Activated CD4-positive, alpha-beta T cell treated with anti-CD3 and anti-CD28 coated beads for 36 hours (primary cell): ENCODE measurements at regions of chr21 and their contacts with region 1.

Region 1: DNA sequence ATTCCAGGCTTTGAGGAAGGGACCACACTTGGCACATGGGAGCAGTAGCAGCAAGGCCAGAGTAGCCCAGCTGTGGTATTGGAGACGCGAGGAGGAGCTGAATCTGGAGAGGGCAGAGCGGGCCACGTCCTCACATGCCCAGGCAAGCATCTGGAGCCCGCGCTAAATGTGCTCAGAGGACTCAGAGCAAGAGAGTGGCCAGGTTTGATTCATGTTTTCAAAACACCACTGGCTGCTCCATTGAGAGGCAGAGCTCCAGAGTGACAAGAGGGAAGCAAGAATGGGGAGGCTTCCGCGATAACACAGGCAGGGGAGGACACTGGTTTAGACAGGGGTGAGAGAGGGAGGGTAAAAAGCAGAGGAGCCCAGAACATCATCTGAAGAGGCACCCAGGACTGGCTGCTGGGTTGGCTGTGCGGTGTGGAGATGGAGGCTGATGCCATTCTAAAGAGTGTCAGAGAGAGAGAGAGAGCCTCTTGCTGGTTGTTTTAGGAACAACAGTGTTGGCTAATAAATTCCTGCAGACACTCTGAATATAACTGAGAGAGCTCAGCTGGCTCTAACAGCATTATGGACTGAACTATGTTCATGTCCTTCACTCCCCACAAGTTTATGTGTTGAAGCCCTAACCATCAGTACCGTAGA is 32.3 kb downstream of the RCAN1 start:
- DNase-seq: peak; percentile 35
- ATAC-seq: peak; percentile 70
- H3K4me3 Mint-ChIP-seq: no peak overlapping the region
- H3K27ac Mint-ChIP-seq: no peak overlapping the region
- H3K4me1 Mint-ChIP-seq: peaks cover 11% of the 10 kb centered on the region
- H3K27me3 Mint-ChIP-seq: no peaks in the 10 kb centered on the region

Region 2: DNA sequence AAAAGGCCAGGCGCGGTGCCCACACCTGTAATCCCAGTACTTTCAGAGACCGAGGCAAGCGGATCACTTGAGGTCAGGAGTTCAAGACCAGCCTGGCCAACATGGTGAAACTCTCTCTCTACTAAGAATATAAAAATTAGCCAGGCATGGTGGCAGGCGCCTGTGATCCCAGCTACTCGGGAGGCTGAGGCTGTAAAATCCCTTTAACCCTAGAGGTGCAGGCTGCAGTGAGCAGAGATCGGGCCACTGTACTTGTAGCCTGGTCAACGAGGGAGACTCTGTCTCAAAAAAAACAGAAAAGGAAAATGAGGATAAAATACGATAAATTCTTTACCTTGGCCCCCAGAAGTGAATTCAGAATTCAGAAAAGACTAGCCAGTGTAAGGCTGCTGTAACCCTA is 1104.4 kb before region 1 on chr21:
- CTCF ChIA-PET with region 1: no interaction called
- POLR2A ChIA-PET with region 1: no interaction called
- intact Hi-C with region 1: no loop called
- DNase-seq: no peak
- ATAC-seq: no peak
- H3K4me3 Mint-ChIP-seq: peak overlapping the region; percentile 83
- H3K27ac Mint-ChIP-seq: peak overlapping the region; percentile 88
- H3K4me1 Mint-ChIP-seq: peaks cover 17% of the 10 kb centered on the region
- H3K27me3 Mint-ChIP-seq: no peaks in the 10 kb centered on the region

Region 3: DNA sequence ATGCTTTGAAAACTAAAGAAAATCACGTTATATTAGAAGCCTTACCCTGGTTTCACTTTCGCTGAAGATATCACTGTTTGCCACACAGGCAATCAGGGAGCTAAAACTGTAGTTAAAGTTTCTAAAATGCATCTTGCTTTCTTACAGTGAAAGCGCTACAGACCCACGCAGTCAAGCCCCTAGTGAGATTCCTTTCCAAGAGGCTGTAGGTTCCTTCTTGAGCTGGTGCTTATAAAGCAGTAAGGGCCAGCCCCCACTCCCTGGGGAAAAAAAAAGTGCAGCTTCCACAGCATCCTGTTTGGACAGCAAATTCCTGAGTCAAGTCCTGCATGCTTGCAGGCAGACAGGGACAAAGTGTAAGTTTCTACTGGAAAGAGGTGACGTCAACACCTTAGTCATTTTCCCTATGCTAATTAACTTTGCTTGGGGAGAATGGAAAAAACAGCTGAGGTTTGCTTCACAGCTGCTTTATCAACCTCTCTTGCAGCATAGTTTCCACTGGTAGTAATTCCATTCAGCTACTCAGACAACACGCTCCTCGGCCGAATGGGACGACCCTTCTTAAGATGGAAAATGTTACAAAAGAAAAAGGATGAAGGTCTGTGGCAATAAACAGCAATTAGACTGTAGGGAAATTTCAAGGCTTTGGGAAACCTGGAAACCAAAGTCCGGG is 55.9 kb before region 1 on chr21:
- CTCF ChIA-PET with region 1: interaction called, 3 read pairs
- POLR2A ChIA-PET with region 1: interaction called, 3 read pairs
- intact Hi-C with region 1: loop called (anchors 1 to 5 kb)
- DNase-seq: peak; percentile 71
- ATAC-seq: peak; percentile 85
- H3K4me3 Mint-ChIP-seq: peak overlapping the region; percentile 55
- H3K27ac Mint-ChIP-seq: peak overlapping the region; percentile 85
- H3K4me1 Mint-ChIP-seq: peaks cover 35% of the 10 kb centered on the region
- H3K27me3 Mint-ChIP-seq: peaks cover 2% of the 10 kb centered on the region

Region 4: GRCh38 chr21:34603002-34603709 is 20.5 kb after region 1 on chr21:
- CTCF ChIA-PET with region 1: interaction called, 11 read pairs
- POLR2A ChIA-PET with region 1: no interaction called
- intact Hi-C with region 1: no loop called
- DNase-seq: peak; percentile 85
- ATAC-seq: peak; percentile 89
- H3K4me3 Mint-ChIP-seq: no peak overlapping the region
- H3K27ac Mint-ChIP-seq: no peak overlapping the region
- H3K4me1 Mint-ChIP-seq: no peaks in the 10 kb centered on the region
- H3K27me3 Mint-ChIP-seq: no peaks in the 10 kb centered on the region

Region 5: GRCh38 chr21:34625030-34625593 is 42.5 kb after region 1 on chr21:
- CTCF ChIA-PET with region 1: no interaction called
- POLR2A ChIA-PET with region 1: no interaction called
- intact Hi-C with region 1: loop called in 1 of 2 experiments (anchors 5 kb)
- DNase-seq: no peak
- ATAC-seq: no peak
- H3K4me3 Mint-ChIP-seq: no peak overlapping the region
- H3K27ac Mint-ChIP-seq: no peak overlapping the region
- H3K4me1 Mint-ChIP-seq: no peaks in the 10 kb centered on the region
- H3K27me3 Mint-ChIP-seq: peaks cover 4% of the 10 kb centered on the region

Region 6: GRCh38 chr21:34639882-34640788 is 57.5 kb after region 1 on chr21:
- CTCF ChIA-PET with region 1: no interaction called
- POLR2A ChIA-PET with region 1: no interaction called
- intact Hi-C with region 1: loop called in 1 of 2 experiments (anchors 1 kb)
- DNase-seq: peak; percentile 65
- ATAC-seq: peak; percentile 77
- H3K4me3 Mint-ChIP-seq: peak overlapping the region; percentile 32
- H3K27ac Mint-ChIP-seq: peak overlapping the region; percentile 72
- H3K4me1 Mint-ChIP-seq: peaks cover 24% of the 10 kb centered on the region
- H3K27me3 Mint-ChIP-seq: no peaks in the 10 kb centered on the region

Region 7: DNA sequence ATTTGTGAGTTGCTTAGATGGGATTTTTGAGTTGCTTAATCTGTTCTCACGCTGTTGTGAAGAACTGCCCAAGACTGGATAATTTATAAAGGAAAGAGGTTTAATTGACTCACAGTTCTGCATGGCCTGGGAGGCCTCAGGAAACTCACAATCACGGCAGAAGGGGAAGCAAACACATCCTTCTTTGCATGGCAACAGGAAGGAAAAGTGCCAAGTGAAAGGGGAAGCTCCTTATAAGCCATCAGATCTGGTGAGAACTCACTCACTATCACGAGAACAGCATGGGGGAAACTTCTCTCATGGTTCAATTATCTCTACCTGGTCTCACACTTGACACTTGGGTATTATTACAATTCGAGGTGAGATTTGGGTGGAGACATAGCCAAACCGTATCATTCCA is 96.4 kb after region 1 on chr21:
- CTCF ChIA-PET with region 1: no interaction called
- POLR2A ChIA-PET with region 1: no interaction called
- intact Hi-C with region 1: no loop called
- DNase-seq: no peak
- ATAC-seq: no peak
- H3K4me3 Mint-ChIP-seq: no peak overlapping the region
- H3K27ac Mint-ChIP-seq: no peak overlapping the region
- H3K4me1 Mint-ChIP-seq: no peaks in the 10 kb centered on the region
- H3K27me3 Mint-ChIP-seq: peaks cover 17% of the 10 kb centered on the region